Endothelial cell of umbilical vein (primary cell): ENCODE measurements at regions of chr20 and their contacts with region 1.

Region 1: GRCh38 chr20:62302341-62303058 is at the start of gene ADRM1:
- DNase-seq: peak; percentile 98
- H3K4me3 ChIP-seq: peak within 1 kb of the TSS; percentile 32 to 95 (median 50)
- H3K27ac ChIP-seq: peak within 1 kb of the TSS; percentile 84
- H3K4me1 ChIP-seq: peaks cover 21% of the 10 kb centered on the region
- H3K27me3 ChIP-seq: no peaks in the 10 kb centered on the region
- CTCF ChIP-seq: peak; percentile 92 to 95
- POLR2A ChIP-seq: peak; percentile 59
- total RNA-seq, gene ADRM1: 144 and 154 TPM in 2 replicates

Region 2: GRCh38 chr20:62237801-62238571 is 64.5 kb before region 1 on chr20 and contains the start of gene OSBPL2:
- CTCF ChIA-PET with region 1: no interaction called
- POLR2A ChIA-PET with region 1: no interaction called
- dilution Hi-C with region 1: no loop called
- intact Hi-C with region 1: loop called (anchors 1 kb)
- DNase-seq: peak; percentile 99
- H3K4me3 ChIP-seq: peak within 1 kb of the TSS in 2 of 3 experiments; percentile 20 to 74
- H3K27ac ChIP-seq: no peak within 1 kb of the TSS
- H3K4me1 ChIP-seq: peaks cover 5% of the 10 kb centered on the region
- H3K27me3 ChIP-seq: no peaks in the 10 kb centered on the region
- CTCF ChIP-seq: no peak
- POLR2A ChIP-seq: no peak
- total RNA-seq, gene OSBPL2: 32.7 and 33.0 TPM in 2 replicates

Region 3: DNA sequence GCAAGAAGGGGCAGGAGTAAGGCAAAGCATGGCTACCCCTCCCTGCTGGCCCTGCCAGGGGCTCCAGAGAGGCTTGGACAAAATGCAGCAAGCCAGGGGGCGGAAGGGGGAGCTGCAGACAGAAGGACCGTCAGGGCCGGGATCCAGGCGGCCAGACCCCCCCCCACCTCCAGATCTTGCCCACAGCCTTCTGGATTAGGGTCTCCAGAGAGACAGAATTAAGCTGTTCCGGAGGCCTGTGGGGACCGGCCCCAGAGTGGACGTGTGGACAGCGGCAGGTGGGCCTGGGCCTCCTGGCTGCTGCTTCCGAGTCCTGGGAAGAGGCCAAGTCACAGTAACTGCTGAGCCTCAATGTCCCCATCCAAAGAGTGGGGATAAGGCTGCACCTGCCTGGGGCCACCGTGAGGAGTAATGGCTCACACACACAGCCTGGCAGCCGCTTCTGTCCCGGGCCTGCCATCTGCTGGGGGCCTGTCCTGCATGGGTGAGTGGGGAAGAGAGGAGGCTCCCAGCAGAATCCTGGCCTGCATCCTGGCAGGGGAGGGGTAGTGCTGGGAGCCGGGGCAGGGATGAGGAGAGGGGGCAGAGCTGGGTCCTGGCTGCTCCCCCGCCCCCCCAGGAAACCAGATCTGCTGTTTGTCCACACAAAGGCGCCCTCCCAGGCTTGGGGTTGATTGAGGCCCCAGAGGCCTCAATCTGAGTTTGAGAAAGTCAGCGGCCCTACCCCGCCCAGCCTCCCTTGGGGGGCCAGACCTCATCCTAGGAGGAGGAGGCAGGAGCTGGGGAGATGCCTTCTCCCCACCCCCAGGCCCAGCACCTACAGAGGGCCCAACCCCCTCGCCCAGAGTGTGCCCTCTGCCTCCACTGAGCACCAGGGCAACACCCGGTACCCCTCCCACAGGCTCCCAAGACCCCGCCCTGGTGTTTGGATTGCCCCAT is 60.8 kb after region 1 on chr20:
- CTCF ChIA-PET with region 1: interaction called, 14 read pairs
- POLR2A ChIA-PET with region 1: interaction called, 3 read pairs
- dilution Hi-C with region 1: no loop called
- intact Hi-C with region 1: loop called (anchors 1 kb)
- DNase-seq: no peak
- H3K4me3 ChIP-seq: no peak overlapping the region
- H3K27ac ChIP-seq: peak overlapping the region; percentile 85
- H3K4me1 ChIP-seq: peaks cover 58% of the 10 kb centered on the region
- H3K27me3 ChIP-seq: no peaks in the 10 kb centered on the region
- CTCF ChIP-seq: no peak
- POLR2A ChIP-seq: no peak

Region 4: DNA sequence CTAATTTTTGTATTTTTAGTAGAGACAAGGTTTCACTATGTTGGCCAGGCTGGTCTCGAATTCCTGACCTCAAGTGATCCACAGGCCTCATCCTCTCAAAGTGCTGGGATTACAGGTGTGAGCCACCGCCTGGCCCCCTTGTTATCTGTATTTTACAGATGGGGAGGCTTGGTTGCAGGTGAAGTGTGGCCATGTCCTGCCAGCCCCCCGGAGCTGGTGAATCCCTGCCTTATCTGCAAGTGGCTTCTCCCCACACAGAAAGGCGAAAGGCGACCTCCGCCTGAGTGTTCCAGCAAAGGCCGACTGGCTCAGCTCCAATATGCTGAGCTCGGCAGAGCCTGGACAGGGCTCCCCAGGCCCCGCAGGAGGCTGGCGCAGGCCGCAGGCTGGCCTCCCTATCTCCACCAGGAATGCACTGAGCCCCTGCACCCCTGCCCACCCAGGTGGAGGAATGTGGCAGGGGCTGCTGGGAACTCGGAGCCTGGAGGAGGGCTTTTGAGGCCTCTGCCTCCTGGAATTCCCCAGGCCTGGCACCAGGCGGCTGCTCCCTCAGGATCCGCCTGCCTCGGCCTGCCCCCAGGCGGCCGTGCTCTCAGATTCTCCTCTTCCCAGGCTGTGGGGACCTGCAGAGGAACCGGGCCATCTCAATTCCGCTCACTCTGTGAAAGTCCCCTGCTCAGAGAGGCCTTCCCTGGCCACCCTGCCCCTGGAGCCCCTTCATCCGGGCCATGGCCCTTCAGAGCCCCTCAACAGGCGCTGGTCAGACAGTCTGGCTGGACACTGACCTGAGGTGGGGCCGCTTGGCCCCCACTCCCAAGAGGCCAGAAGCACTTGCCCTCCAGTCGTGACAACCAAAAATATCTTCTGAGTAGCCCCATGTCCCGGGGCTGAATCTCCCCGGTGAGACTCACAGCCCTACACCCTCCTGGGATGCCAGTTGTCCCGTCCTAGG is 73.9 kb after region 1 on chr20:
- CTCF ChIA-PET with region 1: interaction called, 33 read pairs
- POLR2A ChIA-PET with region 1: interaction called, 4 read pairs
- dilution Hi-C with region 1: no loop called
- intact Hi-C with region 1: no loop called
- DNase-seq: no peak
- H3K4me3 ChIP-seq: no peak overlapping the region
- H3K27ac ChIP-seq: no peak overlapping the region
- H3K4me1 ChIP-seq: peaks cover 11% of the 10 kb centered on the region
- H3K27me3 ChIP-seq: no peaks in the 10 kb centered on the region
- CTCF ChIP-seq: peak; percentile 27 to 57
- POLR2A ChIP-seq: no peak

Region 5: DNA sequence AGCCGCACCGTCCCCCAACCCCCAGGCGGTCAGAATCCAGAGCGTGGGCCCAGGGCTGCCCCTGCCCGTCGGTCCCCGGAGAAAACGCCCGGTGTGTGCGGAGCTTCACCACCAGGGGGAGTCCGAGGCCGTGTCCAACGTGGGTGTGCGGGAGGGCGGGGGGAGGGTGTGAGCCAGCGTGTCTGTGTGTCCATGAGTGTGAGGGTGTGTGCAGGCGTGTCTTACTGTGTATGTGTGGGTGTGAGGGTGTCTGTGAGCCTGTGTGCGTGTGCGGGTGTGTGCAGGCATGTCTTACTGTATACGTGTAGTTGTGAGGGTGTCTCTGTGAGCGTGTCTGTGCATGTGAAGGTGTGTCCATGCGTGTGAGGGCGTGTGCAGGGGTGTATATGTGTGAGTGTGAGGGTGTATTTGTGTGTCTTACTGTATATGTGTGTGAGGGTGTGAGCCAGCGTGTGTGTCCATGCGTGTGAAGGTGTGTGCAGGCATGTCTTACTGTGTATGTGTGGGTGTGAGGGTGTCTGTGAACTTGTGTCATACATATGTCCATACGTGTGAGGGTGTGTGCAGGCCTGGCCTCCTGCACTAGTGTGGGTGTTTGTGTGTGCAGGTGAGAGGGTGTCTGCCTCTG is 197.9 kb after region 1 on chr20:
- CTCF ChIA-PET with region 1: no interaction called
- POLR2A ChIA-PET with region 1: no interaction called
- dilution Hi-C with region 1: no loop called
- intact Hi-C with region 1: loop called (anchors 1 kb)
- DNase-seq: peak; percentile 42
- H3K4me3 ChIP-seq: no peak overlapping the region
- H3K27ac ChIP-seq: no peak overlapping the region
- H3K4me1 ChIP-seq: no peaks in the 10 kb centered on the region
- H3K27me3 ChIP-seq: no peaks in the 10 kb centered on the region
- CTCF ChIP-seq: peak; percentile 77 to 96
- POLR2A ChIP-seq: no peak